MCF 10A (cell line): ENCODE measurements at regions of chr5 and their contacts with region 1.

Region 1: GRCh38 chr5:101991486-101991885 is 304.6 kb downstream of the SLCO4C1 start:
- DNase-seq: no peak
- H3K4me3 Mint-ChIP-seq: no peak overlapping the region
- H3K27ac Mint-ChIP-seq: no peak overlapping the region
- H3K4me1 Mint-ChIP-seq: no peaks in the 10 kb centered on the region
- H3K27me3 Mint-ChIP-seq: peaks cover 11% of the 10 kb centered on the region
- CTCF ChIP-seq: no peak

Region 2: DNA sequence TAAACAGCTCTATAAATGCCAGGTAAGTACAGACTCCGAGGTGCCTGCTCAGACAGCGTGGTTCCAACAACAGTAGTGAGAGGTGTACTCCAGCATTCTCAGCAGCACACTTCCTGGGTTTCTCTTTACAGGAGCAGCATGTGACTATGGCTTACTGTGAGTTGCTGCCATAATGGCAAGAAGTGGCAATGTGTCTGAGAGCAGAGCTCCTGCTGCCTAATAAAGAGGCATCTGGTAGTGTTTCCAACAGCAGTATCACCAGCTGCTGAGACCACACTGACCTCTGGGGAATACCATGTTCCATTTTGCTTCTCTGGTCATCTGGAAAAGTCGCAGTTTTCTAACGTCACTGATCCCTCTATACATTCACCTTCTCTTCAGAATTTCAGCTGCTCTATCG is 93.6 kb before region 1 on chr5:
- CTCF ChIA-PET with region 1: no interaction called
- POLR2A ChIA-PET with region 1: no interaction called
- intact Hi-C with region 1: no loop called
- DNase-seq: no peak
- H3K4me3 Mint-ChIP-seq: no peak overlapping the region
- H3K27ac Mint-ChIP-seq: no peak overlapping the region
- H3K4me1 Mint-ChIP-seq: no peaks in the 10 kb centered on the region
- H3K27me3 Mint-ChIP-seq: peaks cover 11% of the 10 kb centered on the region
- CTCF ChIP-seq: no peak

Region 3: DNA sequence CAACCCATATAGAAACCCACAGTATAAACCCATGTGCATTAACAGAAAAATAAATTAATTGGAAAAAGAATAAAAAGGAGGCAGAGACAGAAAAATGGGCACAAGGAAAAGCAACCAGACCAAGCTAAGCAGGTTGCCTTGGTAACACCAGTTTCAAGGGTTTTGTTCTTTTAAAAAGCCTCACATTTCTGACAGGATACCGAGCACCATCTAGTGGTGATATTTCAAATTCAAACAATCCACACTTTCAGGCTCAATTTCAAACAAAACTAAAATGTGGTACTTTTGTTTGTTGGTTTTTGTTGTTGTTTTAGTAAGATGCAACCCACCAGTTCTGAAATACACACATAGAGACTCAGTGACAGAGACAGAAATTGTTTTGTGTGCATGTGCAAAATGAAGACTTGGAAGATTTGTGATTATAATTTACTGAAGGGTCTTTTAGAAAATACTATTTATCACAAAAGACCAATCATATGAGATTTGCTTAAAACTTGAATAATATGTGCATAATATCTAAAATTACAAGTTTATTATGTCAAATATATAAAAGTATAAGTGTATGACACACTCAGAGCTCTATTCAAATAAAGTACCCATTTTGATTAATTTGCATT is 13.6 kb before region 1 on chr5:
- CTCF ChIA-PET with region 1: interaction called, 15 read pairs
- POLR2A ChIA-PET with region 1: no interaction called
- intact Hi-C with region 1: no loop called
- DNase-seq: peak; percentile 58
- H3K4me3 Mint-ChIP-seq: no peak overlapping the region
- H3K27ac Mint-ChIP-seq: no peak overlapping the region
- H3K4me1 Mint-ChIP-seq: no peaks in the 10 kb centered on the region
- H3K27me3 Mint-ChIP-seq: peaks cover 27% of the 10 kb centered on the region
- CTCF ChIP-seq: peak; percentile 69

Region 4: DNA sequence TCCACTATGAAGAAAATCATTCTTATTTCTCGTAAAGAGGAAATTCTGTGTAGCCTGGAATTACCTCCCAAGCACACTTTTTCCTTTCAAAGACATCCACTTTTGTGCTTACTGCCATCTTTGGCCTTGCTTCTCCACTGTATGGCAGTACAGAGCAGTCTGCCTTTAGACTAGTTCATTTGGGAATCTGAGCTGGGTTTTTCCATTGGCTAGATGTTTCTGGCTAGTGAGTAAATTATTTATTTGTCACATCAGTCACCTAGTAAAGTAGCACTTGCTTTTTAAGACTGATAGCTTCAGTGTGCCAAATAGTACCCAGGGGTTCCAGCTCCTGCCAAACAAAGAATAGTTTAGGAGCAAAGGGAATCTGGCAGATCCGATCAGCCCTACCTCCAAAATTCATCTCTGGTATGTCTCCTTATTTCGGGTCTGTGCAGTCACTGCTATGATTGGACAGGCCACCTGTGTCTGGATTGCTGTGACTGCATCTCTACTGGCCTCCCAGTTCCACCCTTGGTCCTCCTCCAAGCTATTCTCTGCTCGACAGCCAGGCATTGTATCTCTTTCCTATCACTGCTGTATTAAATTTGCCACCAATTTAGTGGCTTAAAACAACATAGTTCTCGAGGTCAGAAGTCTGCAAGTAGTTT is 1473.5 kb after region 1 on chr5:
- CTCF ChIA-PET with region 1: no interaction called
- POLR2A ChIA-PET with region 1: no interaction called
- intact Hi-C with region 1: no loop called
- DNase-seq: no peak
- H3K4me3 Mint-ChIP-seq: no peak overlapping the region
- H3K27ac Mint-ChIP-seq: no peak overlapping the region
- H3K4me1 Mint-ChIP-seq: peaks cover 5% of the 10 kb centered on the region
- H3K27me3 Mint-ChIP-seq: no peaks in the 10 kb centered on the region
- CTCF ChIP-seq: no peak